ENCODE measurements at regions of chr1 and their contacts with region 1.

Region 1: DNA sequence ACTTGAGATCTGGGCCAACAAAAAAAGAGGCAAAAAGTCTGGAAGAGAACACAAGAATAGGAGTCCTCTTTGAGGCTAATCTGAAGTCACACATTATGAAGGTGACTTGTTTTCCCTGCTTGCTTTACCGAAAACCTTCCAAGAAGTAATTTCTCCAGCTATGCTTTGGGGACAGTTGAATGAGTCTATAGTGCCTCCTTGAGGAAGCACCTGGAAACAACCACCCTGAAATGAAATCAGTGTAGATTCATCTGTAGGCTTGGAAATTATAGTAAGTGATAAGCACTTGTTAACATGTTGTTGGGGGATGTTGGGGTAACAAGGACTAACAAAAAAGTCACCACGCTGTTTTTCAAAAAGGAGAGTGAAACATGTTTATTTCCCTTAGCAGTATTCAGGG is 23.4 kb upstream of the RPTN start:
- DNase-seq: peak in 2 of 42 donors; percentile 13 to 16

Region 2: DNA sequence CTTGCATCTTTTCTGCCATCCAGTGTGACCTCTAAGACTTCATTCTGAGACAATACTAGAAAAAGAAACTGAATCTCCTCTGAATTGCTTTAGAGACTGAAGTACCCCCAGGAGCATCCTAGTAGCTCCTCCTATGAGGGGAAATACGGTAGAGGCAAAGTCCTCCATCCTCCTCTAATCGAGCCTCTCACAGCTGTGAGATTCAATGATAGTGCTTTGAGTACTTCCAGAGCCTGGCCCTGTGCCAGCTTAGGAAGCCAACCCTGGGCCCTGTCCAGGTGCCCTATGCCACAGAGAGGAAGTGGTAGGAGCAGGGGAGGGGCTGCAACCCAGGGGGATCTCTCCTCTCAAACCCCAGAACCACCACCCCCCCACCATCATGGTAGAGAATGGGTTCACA is 361.5 kb before region 1 on chr1:
- intact Hi-C with region 1: no loop called
- DNase-seq: no peak

Region 3: GRCh38 chr1:152052606-152053005 is 129.8 kb before region 1 on chr1:
- intact Hi-C with region 1: loop called (anchors 5 kb)
- DNase-seq: peak; percentile 51 to 94 (median 86)

Region 4: DNA sequence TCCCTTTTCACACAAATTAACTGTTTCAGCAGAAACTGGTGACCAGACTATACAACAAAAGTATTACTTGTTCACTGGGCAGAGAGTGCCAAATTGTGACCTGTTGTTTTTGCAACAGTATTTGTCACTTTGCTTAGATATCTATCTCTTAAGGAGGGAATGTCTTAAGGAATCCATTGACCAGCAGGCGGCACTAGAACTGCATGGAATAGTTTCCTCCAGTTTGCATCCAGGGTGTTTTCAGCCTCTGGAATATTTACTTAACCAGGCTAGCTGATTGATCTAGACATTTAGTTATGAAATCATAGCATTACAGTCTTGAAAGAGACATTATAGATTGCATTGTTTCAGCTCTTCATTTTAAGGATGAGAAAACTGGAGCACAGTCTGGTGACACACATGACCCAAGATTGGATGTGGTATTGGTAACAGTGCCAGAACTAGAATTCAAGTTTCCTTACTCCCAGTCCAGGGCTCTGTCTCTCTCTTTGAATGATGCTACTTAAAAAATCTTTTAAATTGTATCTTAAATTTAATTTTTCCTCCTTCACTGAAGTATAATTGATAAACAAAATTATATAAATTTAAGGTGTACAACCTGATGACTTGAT is 40.4 kb before region 1 on chr1:
- intact Hi-C with region 1: loop called (anchors 5 kb)
- DNase-seq: peak; percentile 9 to 84 (median 60)

Region 5: DNA sequence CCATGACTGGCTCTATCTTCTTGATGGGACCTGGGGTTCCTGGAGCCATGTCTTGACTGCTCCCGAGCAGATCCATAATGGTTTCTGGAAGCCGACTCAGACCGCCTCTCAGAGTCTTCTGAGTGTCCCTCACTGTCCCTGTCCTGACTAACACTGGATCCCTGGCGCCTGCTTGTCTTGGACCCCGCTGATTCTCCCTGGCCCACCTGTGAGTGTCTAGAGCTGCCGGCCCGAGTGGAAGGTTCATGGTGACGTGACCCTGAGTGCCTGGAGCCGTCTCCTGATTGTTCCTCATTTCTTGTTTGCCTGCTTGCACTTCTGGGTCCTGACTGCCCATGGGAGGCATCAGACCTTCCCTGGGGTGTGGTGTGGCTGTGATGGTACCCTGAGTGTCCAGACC is 127.5 kb after region 1 on chr1:
- intact Hi-C with region 1: no loop called
- DNase-seq: no peak

Measured in head of caudate nucleus (tissue), 42 donors.